PC-3 (cell line): ENCODE measurements at regions of chr19 and their contacts with region 1.

Region 1: GRCh38 chr19:12294249-12295158 is at the start of gene ZNF44:
- DNase-seq: peak; percentile 99
- ATAC-seq: peak; percentile 97
- H3K4me3 ChIP-seq: peak within 1 kb of the TSS; percentile 99
- H3K27ac ChIP-seq: peak within 1 kb of the TSS; percentile 26
- H3K4me1 ChIP-seq: peaks cover 10% of the 10 kb centered on the region
- H3K27me3 ChIP-seq: no peaks in the 10 kb centered on the region
- CTCF ChIP-seq: no peak
- total RNA-seq, gene ZNF44: 3.0 and 8.2 TPM in 2 replicates

Region 2: DNA sequence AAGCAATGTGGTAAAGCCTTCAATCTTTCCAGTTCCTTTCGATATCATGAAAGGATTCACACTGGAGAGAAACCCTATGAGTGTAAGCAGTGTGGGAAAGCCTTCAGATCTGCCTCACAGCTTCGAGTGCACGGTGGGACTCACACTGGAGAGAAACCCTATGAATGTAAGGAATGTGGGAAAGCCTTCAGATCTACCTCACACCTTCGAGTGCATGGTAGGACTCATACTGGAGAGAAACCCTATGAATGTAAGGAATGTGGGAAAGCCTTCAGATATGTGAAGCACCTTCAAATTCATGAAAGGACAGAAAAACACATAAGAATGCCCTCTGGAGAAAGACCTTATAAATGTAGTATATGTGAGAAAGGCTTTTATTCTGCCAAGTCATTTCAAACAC is 345.3 kb before region 1 on chr19:
- CTCF ChIA-PET with region 1: no interaction called
- POLR2A ChIA-PET with region 1: no interaction called
- intact Hi-C with region 1: no loop called
- DNase-seq: no peak
- ATAC-seq: no peak
- H3K4me3 ChIP-seq: peak overlapping the region; percentile 10; the same call in 1 of the 2 replicates
- H3K27ac ChIP-seq: no peak overlapping the region
- H3K4me1 ChIP-seq: no peaks in the 10 kb centered on the region
- H3K27me3 ChIP-seq: no peaks in the 10 kb centered on the region
- CTCF ChIP-seq: no peak

Region 3: DNA sequence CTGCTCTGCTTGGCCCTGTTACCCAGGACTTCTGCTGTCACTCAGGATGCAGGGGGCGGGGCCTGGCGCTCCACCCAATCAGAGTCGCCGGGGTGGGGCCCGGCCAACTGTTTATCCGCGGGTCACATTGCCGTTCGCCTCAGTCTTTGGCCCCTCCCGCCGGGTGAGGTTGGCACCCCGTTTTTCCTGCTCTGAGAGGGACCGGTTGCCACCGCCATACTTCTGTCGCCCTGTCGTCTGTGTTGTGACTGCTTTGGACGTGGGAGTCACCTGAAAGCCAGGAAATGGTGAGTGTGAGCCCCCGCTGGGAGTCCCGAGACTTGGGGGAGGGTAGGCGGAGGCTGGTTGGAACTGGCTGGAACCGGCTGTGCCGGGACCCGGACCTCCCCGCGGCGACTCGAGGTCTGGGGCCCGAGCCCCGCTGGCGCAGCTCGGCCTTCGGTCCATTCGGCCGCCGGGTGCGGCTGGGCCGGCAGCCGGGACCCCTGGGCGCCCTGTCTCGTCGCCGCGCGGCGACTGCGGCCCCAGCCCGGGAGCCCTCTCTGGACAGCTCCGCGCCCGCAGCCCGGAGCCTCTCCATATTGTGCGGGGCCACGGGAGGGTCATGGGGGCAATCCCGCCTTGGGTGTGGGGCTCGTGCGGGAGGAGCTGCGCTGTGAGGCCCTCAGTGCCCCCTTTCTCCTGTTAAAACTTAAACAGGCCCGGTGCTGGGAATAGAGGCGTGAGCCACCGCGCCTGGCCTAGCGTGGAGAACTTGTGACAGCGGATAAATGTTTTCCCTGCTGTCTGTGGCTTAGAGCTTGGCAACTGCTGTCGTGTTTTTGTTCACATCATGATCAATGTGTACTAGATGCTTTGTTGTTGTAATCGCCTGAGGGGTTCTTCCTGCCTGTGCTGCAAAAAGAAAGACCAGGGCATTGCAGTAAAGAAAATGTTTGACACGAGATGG is 229.6 kb before region 1 on chr19 and contains the start of gene ZNF844:
- CTCF ChIA-PET with region 1: no interaction called
- POLR2A ChIA-PET with region 1: interaction called, 24 read pairs
- intact Hi-C with region 1: no loop called
- DNase-seq: peak; percentile 89
- ATAC-seq: peak; percentile 95
- H3K4me3 ChIP-seq: peak within 1 kb of the TSS; percentile 90
- H3K27ac ChIP-seq: peak within 1 kb of the TSS; percentile 10
- H3K4me1 ChIP-seq: no peaks in the 10 kb centered on the region
- H3K27me3 ChIP-seq: no peaks in the 10 kb centered on the region
- CTCF ChIP-seq: no peak
- total RNA-seq, gene ZNF844: 4.0 and 4.7 TPM in 2 replicates

Region 4: DNA sequence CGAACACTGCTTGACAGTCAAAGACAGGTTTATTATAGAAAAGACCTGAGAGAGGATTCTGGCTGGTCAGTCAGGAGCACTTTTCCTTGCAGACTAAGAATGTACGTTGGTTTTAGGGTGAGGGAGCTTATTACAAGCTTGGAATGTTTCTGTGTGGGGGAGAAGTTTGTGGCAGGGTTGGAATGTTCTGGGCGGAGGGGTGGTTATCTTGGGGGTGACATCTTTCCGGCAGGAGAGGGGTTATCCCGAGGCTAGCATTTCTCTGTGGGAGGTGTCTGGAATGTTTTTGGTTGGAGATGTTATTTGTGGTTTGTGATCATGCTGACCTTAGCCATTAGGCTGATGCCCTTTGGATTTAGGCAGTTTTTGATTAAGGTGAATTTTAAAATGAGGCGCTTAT is 69.8 kb before region 1 on chr19:
- CTCF ChIA-PET with region 1: no interaction called
- POLR2A ChIA-PET with region 1: no interaction called
- intact Hi-C with region 1: loop called (anchors 5 kb)
- DNase-seq: no peak
- ATAC-seq: no peak
- H3K4me3 ChIP-seq: no peak overlapping the region
- H3K27ac ChIP-seq: no peak overlapping the region
- H3K4me1 ChIP-seq: no peaks in the 10 kb centered on the region
- H3K27me3 ChIP-seq: no peaks in the 10 kb centered on the region
- CTCF ChIP-seq: no peak

Region 5: GRCh38 chr19:12400633-12401502 is 106.4 kb after region 1 on chr19 and contains the start of gene ZNF799:
- CTCF ChIA-PET with region 1: no interaction called
- POLR2A ChIA-PET with region 1: no interaction called
- intact Hi-C with region 1: loop called (anchors 5 kb)
- DNase-seq: peak; percentile 99
- ATAC-seq: peak; percentile 96
- H3K4me3 ChIP-seq: peak within 1 kb of the TSS; percentile 92
- H3K27ac ChIP-seq: peak within 1 kb of the TSS; percentile 67
- H3K4me1 ChIP-seq: 0 out of 2 replicates have a peak, but pooled peaks cover 4% of the 10 kb centered on the region
- H3K27me3 ChIP-seq: no peaks in the 10 kb centered on the region
- CTCF ChIP-seq: 0 out of 2 replicates have a peak, but pooled peaks have one; percentile 18
- total RNA-seq, gene ZNF799: 3.8 and 5.9 TPM in 2 replicates

Region 6: DNA sequence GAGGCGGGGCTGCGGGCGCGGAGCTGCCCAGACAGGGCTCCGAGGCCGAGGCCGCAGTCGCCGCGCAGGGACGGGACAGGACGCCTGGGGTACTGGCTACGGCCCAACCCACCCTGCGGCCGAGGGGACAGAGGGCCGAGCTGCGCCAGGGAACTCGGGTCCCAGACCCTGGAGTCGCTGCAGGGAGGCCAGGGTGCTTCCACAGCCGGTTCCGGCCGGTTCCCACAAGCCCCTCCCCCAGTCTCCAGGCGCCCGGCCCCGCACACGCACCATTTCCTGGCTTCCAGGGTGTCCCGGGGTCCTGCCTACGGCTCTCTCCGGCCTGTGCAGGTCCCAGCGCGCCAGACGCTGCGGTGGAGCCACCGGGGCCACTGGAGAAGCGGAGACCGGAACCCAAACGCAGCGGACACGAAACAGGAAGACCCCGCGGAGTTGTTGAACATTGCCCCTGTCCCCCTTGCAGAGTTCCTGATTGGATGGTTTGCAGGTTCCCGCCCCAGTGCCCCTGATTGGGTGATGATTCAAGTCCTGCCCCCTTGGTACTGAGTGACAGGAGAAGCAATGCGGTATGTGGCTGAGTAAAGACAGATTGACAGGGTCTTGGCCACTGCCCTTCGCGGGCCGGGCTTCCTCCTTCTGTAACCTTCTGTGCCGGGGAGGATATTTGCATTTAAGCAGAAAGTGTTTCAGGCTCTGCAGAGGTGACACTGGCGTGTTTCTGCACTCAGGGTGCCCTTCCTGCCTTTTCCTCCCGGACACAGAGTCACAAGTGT is 256.7 kb after region 1 on chr19 and contains the start of gene ZNF564:
- CTCF ChIA-PET with region 1: interaction called, 3 read pairs
- POLR2A ChIA-PET with region 1: interaction called, 5 read pairs
- intact Hi-C with region 1: loop called (anchors 1 kb)
- DNase-seq: peak; percentile 99
- ATAC-seq: peak; percentile 97
- H3K4me3 ChIP-seq: peak within 1 kb of the TSS; percentile 83
- H3K27ac ChIP-seq: peak within 1 kb of the TSS; percentile 73
- H3K4me1 ChIP-seq: 0 out of 2 replicates have a peak, but pooled peaks cover 6% of the 10 kb centered on the region
- H3K27me3 ChIP-seq: no peaks in the 10 kb centered on the region
- CTCF ChIP-seq: no peak
- total RNA-seq, gene ZNF564: 3.8 and 6.0 TPM in 2 replicates